B cell (primary cell): ENCODE measurements at regions of chr14 and their contacts with region 1.

Region 1: DNA sequence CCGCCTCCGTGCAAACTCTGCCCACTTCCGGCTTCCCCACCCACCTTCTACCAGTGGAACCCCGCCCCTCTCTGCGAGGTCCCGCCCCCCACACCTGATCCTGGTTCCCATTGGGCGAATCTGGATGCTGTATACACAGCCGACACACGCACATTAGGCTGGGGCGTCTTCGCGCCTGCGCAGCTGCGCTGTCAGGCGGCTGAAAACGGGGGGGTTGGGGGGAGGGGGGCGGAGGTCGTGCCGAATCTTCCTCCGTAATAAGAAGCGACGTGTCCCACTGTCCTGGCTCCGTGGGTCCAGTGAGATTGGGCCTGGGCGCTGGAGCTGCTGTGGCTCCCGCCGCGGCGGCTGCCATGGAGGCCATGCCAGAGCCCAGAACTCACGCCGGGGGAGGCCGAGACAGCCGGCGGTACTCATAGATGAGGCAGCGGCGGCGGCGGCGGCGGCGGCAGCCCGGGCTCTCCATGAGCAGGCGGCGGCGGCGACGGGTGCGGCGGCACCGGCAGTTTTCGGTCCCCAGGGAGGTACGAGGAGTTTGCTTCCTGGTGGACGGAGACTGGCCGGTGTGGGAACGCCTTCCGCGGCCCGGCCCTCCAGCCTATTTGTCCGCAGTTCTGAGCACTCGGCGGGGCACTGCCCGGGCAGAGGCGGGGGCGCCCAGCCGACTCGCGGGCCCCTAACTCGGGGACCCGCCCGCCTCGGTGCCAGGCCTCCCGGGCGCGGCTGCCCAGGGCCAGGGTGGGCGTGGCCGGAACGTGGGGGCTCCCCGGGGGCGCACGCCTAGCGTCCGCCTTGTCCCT is 64.5 kb downstream of the KLHL28 start:
- DNase-seq: peak; percentile 97
- ATAC-seq: peak; percentile 96
- H3K4me3 ChIP-seq: peak overlapping the region; percentile 45 to 87 (median 80)
- H3K4me3 Mint-ChIP-seq: peak overlapping the region; percentile 96
- H3K27ac ChIP-seq: peak overlapping the region; percentile 87 to 96
- H3K27ac Mint-ChIP-seq: peak overlapping the region; percentile 98
- H3K4me1 ChIP-seq: peaks cover 10 to 11% of the 10 kb centered on the region in 2 donors
- H3K4me1 Mint-ChIP-seq: peaks cover 14% of the 10 kb centered on the region
- H3K27me3 ChIP-seq: no peaks in the 10 kb centered on the region
- H3K27me3 Mint-ChIP-seq: no peaks in the 10 kb centered on the region
- CTCF ChIP-seq: no peak

Region 2: DNA sequence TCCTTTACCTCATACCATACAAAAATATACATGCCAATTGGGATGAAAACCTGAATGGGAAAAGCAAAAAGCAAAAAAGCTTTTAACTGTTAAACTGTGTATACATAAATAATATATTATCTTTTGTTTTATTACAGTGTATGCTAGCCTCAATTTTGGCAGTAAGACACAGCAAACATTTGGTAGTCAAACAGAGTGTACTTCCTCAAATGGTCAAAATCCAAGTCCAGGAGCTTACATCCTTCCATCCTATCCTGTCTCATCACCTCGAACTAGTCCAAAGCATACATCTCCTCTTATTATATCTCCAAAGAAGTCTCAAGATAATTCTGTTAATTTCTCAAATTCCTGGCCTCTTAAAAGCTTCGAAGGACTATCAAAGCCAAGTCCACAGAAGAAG is 106.7 kb after region 1 on chr14:
- CTCF ChIA-PET with region 1: no interaction called
- POLR2A ChIA-PET with region 1: no interaction called
- intact Hi-C with region 1: no loop called
- DNase-seq: no peak
- ATAC-seq: no peak
- H3K4me3 ChIP-seq: no peak overlapping the region
- H3K4me3 Mint-ChIP-seq: no peak overlapping the region
- H3K27ac ChIP-seq: no peak overlapping the region
- H3K27ac Mint-ChIP-seq: no peak overlapping the region
- H3K4me1 ChIP-seq: no peaks in the 10 kb centered on the region
- H3K4me1 Mint-ChIP-seq: no peaks in the 10 kb centered on the region
- H3K27me3 ChIP-seq: no peaks in the 10 kb centered on the region
- H3K27me3 Mint-ChIP-seq: no peaks in the 10 kb centered on the region
- CTCF ChIP-seq: no peak

Region 3: DNA sequence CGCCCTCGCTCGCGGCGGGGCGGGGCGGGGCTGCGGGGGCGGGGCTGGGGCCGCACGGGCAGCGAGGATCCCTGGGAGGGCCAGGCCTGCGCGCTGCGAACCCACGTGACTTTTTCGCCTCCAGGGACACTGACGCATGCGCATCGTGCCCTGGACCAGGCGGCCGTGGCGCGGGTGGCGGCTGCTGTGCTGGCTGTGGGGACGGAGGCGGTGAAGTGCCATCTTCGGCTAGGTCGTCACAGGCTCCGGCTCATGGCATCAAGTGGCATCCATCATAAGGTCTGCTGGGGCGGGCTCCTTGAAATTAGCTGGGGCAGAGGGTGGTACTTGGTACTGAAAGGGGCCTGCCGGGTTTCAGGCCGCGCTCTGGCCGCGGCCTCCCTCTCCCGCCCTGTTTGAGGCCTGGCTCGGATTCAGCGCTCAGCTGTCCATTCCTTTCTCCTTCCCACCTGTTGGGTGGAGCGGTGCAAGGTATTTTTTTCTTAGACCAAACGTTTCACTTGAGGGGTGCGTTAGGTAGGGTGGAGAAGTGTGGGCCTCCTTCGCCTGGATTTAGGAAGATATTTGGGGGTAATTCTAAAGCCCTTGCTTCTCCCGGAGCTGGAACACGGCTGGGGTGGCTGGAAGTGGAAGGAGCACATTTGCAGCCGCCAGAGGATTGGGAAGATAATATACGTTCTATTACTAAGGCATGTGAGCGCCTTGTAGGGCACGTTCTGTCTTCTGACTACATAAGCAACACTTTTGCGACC is 186.9 kb after region 1 on chr14 and contains the start of gene PRPF39:
- CTCF ChIA-PET with region 1: no interaction called
- POLR2A ChIA-PET with region 1: no interaction called
- intact Hi-C with region 1: loop called (anchors 1 kb)
- DNase-seq: peak; percentile 97
- ATAC-seq: peak; percentile 93
- H3K4me3 ChIP-seq: peak within 1 kb of the TSS; percentile 64 to 95 (median 91)
- H3K4me3 Mint-ChIP-seq: peak within 1 kb of the TSS; percentile 96
- H3K27ac ChIP-seq: peak within 1 kb of the TSS; percentile 74 to 96
- H3K27ac Mint-ChIP-seq: peak within 1 kb of the TSS; percentile 96
- H3K4me1 ChIP-seq: peaks cover 21 to 36% of the 10 kb centered on the region in 2 donors
- H3K4me1 Mint-ChIP-seq: peaks cover 49% of the 10 kb centered on the region
- H3K27me3 ChIP-seq: no peaks in the 10 kb centered on the region
- H3K27me3 Mint-ChIP-seq: no peaks in the 10 kb centered on the region
- CTCF ChIP-seq: no peak
- total RNA-seq, gene PRPF39: 67.5 and 72.7 TPM in 2 replicates